HEK293T (cell line): ENCODE measurements at regions of chr6 and their contacts with region 1.

Region 1: GRCh38 chr6:100892693-100893092 is 11.6 kb upstream of the ASCC3 start:
- DNase-seq: no peak

Region 2: DNA sequence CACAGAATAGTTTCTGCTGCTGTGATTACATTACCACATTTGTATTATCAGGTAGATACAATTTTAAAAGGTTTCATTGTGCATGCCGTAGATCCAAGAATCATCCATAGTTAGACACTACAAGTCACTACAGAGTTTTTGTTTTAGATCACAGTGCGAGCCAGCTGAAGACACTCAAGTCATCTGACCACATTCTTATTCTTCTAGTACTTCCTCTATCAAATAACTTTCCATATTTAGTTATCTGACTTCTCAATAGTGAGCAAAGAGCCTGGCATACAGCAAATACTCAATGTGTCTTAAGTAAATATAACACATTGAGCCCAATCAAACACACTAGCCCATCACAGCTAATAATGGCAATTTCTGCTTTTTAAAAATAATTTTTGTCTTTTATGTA is 206.9 kb before region 1 on chr6:
- CTCF ChIA-PET with region 1: no interaction called
- POLR2A ChIA-PET with region 1: no interaction called
- DNase-seq: no peak

Region 3: GRCh38 chr6:100880853-100881706 is 11.6 kb before region 1 on chr6 and contains the start of gene ASCC3:
- CTCF ChIA-PET with region 1: interaction called, 3 read pairs
- POLR2A ChIA-PET with region 1: interaction called, 12 read pairs
- DNase-seq: peak; percentile 88